OCI-LY7 (cell line): ENCODE measurements at regions of chr11 and their contacts with region 1.

Region 1: DNA sequence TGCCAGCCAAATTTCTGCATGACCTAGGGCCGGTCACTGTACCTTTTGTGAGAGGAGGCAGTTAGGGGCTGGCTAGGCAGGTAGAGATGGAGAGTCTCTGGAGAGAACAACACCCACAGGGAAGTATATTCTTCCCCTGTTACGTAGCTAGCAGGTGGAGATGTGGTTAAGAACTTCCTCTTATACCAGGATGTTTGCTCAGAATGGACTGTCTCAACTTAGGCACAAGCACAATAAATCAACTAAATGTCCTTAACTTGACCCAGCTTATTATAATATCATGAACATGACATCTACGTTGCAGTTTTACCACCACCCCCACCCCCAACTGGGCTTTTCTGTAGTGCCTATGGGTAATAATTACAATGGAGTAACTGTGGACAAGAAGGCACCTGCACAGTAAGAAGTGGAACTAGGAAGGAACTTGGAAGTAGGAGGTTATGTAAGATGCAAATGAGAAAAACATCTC is 60.7 kb upstream of the MPEG1 start:
- DNase-seq: peak; percentile 97
- H3K4me3 ChIP-seq: peak overlapping the region; percentile 56
- H3K27ac ChIP-seq: peak overlapping the region; percentile 97
- H3K4me1 ChIP-seq: peaks cover 74% of the 10 kb centered on the region
- CTCF ChIP-seq: no peak

Region 2: DNA sequence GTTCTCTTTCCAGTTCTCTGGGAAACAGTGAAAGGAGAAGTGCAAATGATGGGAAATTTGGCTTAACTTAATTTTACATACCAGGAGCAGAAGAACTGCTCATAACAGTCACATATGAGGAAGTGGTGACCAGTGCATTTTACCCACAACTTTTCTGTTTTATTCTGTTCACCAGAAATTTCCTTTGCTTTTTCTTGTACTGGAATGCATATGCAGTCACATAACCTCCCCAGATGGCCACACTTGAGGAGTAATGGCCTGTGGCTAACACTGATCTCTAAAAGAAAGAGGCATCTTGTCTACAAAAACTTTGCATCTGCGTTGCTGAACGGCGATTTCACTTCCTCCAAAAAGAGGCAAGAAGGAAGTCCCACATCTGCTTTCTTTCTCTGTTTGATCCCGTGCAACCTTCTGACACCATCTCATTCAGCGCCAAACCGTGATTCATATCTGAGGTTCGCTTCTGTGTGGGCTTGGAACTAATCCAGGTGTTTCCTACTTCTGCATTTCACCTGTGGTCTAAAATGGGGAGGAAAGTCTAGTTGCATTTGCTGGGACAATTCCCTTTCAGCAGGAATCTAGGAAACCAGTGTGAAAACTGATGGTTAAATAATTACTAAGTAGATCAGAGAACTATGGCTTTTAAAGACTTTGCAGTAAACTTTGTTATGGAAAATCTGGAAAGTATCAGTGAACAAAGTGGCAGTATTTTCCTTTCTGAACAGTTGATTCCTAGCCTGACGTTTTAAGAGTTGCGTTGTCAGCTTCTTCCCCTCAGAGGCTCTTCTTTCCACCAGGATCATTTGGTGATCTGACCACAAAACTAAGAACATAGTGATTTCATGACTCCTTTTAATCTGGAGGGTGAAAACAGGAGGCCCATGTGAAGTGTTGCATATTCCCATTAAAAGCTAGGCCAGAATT is 56.5 kb before region 1 on chr11:
- CTCF ChIA-PET with region 1: no interaction called
- POLR2A ChIA-PET with region 1: interaction called, 8 read pairs
- intact Hi-C with region 1: loop called (anchors 2 kb)
- DNase-seq: peak; percentile 94
- H3K4me3 ChIP-seq: peak overlapping the region; percentile 37
- H3K27ac ChIP-seq: peak overlapping the region; percentile 58
- H3K4me1 ChIP-seq: peaks cover 44% of the 10 kb centered on the region
- CTCF ChIP-seq: no peak

Region 3: DNA sequence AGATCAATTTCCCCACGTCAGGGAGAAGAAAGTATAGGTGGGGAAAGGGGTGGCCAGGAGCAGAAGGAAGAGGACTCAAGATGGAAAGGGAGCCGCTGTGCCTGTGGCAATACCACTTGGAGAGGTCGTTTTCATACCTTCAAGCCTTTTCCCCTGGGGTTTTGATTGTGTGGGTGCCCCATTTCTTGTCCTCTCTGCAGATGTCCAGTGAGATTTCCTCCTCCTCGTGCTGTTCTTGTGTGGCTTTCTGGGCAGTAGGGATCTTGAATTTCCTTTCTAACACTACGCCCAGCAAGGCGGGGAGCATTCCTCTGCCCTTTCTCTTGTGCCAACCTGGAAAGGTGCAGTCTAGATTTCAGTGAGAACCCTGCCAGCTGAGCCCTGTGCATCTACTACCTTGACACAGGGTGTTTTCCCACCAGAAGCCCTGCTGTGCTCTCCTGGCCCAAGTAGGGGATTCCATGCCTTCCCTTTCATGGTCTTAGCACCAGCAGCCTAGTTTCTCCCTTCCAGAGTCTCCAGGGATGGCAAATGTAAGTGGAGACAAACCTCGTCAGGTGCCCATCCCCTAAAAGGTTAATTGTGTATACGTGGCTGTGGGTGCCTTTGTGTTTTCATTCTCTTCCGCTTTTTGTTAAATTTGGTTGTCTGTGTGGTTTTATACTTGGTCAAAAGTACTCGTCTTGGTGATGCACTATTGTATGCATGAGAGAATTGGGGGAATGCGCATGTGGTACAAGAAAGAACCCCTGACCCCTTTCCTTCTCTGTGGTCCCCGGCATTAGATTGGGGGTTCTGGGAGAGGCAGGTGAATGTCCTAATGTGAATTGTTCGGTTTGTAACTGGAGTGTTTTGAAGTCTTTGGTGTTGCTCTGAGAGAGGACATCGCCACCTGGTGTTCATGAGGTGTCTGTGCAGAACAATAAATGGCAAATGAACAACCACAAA is 10.7 kb after region 1 on chr11:
- CTCF ChIA-PET with region 1: interaction called, 3 read pairs
- POLR2A ChIA-PET with region 1: interaction called, 10 read pairs
- intact Hi-C with region 1: loop called (anchors 1 kb)
- DNase-seq: peak; percentile 87
- H3K4me3 ChIP-seq: peak overlapping the region; percentile 37
- H3K27ac ChIP-seq: peak overlapping the region; percentile 44
- H3K4me1 ChIP-seq: peaks cover 25% of the 10 kb centered on the region
- CTCF ChIP-seq: peak; percentile 95

Region 4: GRCh38 chr11:59615637-59616395 is 342.4 kb after region 1 on chr11 and contains the start of gene OSBP:
- CTCF ChIA-PET with region 1: no interaction called
- POLR2A ChIA-PET with region 1: interaction called, 4 read pairs
- intact Hi-C with region 1: loop called (anchors 5 kb)
- DNase-seq: peak; percentile 99
- H3K4me3 ChIP-seq: peak within 1 kb of the TSS; percentile 98
- H3K27ac ChIP-seq: peak within 1 kb of the TSS; percentile 43
- H3K4me1 ChIP-seq: peaks cover 38% of the 10 kb centered on the region
- CTCF ChIP-seq: no peak
- total RNA-seq, gene OSBP: 16.9 and 19.2 TPM in 2 replicates

Region 5: GRCh38 chr11:59810189-59810910 is 536.9 kb after region 1 on chr11 and contains the start of gene MRPL16:
- CTCF ChIA-PET with region 1: no interaction called
- POLR2A ChIA-PET with region 1: no interaction called
- intact Hi-C with region 1: loop called (anchors 10 kb)
- DNase-seq: peak; percentile 96
- H3K4me3 ChIP-seq: peak within 1 kb of the TSS; percentile 98
- H3K27ac ChIP-seq: peak within 1 kb of the TSS; percentile 80
- H3K4me1 ChIP-seq: peaks cover 53% of the 10 kb centered on the region
- CTCF ChIP-seq: peak; percentile 63
- total RNA-seq, gene MRPL16: 133 and 159 TPM in 2 replicates